Ascending aorta (tissue), 2 donors: ENCODE measurements at regions of chr5 and their contacts with region 1.

Region 1: GRCh38 chr5:52657247-52657645 is 130.5 kb upstream of the ITGA1 start:
- DNase-seq: no peak
- H3K4me3 ChIP-seq: no peak overlapping the region
- H3K27ac ChIP-seq: no peak overlapping the region
- H3K4me1 ChIP-seq: no peaks in the 10 kb centered on the region
- H3K27me3 ChIP-seq: no peaks in the 10 kb centered on the region
- CTCF ChIP-seq: peak; percentile 20 to 61 (median 41)

Region 2: DNA sequence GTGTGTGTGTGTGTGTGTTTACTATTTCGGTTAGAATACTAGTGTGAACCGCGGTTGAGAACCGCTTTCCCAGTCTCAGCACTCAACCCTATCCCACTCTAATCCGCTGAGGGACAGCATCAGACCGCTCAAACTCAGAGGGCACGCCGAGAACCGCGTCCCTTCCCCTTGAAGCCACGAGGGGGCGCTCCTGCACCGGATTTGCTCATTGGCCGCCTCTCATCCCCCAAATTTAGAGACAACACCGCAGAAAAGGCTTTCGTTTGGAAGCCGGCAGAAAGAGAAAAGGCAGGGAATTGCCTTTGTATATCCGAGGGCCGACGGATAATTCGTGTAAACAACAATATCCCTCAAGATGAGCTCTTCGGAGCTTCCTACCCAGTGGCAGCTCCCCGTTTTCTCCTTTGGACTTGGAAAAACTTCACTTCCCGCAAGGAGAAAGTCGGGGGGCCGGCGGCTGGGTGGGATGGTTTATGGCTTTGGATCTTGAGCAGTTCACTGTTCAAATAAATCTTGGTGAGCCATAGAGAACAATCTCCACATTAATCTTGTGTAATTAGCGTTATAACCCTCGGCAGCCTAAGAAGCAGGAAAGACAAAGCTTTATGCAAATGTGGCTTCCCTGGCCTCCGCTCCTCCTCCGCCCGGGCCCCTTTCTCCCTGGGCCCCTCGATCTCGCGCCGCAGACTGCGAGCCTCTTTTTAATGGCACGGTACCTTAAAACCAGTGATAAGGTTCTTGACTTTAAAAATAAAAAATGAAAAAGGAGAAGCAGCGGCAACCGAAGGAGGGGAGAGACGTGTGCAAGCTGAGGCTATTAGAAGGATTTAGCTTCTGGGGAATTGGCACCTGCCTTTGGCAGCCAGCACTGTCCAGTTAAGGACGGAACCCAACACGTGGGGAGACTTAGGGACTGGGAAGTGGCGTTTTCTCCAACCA is 1694.0 kb before region 1 on chr5:
- intact Hi-C with region 1: loop called (anchors 5 kb)
- DNase-seq: no peak
- H3K4me3 ChIP-seq: peak overlapping the region; percentile 49 to 53
- H3K27ac ChIP-seq: no peak overlapping the region
- H3K4me1 ChIP-seq: peaks cover 0 to 3% of the 10 kb centered on the region in 2 donors
- H3K27me3 ChIP-seq: peaks cover 14% of the 10 kb centered on the region
- CTCF ChIP-seq: peak; percentile 34 to 71 (median 71)

Region 3: DNA sequence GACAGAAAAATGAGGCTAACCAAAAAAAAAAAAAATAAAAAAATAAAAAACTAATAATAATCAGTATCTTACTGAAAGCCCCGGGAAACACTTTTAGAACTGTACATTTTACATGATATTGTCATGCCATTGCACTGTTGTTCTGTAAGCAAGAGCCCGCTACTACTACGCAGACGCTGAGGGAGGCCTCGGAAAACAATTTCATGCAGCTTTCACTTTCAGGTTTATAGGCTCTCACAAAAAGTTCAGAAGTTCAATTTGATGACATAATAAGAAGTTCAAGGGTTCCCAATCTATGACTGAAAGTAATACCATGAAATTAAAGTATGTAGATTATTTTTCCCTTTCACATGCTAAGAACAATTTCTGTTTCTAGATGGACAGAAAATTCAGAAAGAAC is 187.8 kb before region 1 on chr5:
- intact Hi-C with region 1: no loop called
- DNase-seq: no peak
- H3K4me3 ChIP-seq: no peak overlapping the region
- H3K27ac ChIP-seq: no peak overlapping the region
- H3K4me1 ChIP-seq: no peaks in the 10 kb centered on the region
- H3K27me3 ChIP-seq: no peaks in the 10 kb centered on the region
- CTCF ChIP-seq: no peak